PC-3 (cell line): ENCODE measurements at regions of chr12 and their contacts with region 1.

Region 1: GRCh38 chr12:93397412-93397811 is 19.7 kb downstream of the NUDT4 start:
- DNase-seq: no peak
- ATAC-seq: no peak
- H3K4me3 ChIP-seq: no peak overlapping the region
- H3K27ac ChIP-seq: no peak overlapping the region
- H3K4me1 ChIP-seq: no peaks in the 10 kb centered on the region
- H3K27me3 ChIP-seq: no peaks in the 10 kb centered on the region
- CTCF ChIP-seq: no peak

Region 2: GRCh38 chr12:92827836-92828431 is 569.5 kb before region 1 on chr12:
- CTCF ChIA-PET with region 1: no interaction called
- POLR2A ChIA-PET with region 1: no interaction called
- intact Hi-C with region 1: loop called (anchors 2 kb)
- DNase-seq: peak; percentile 72
- ATAC-seq: peak; percentile 53
- H3K4me3 ChIP-seq: no peak overlapping the region
- H3K27ac ChIP-seq: no peak overlapping the region
- H3K4me1 ChIP-seq: no peaks in the 10 kb centered on the region
- H3K27me3 ChIP-seq: no peaks in the 10 kb centered on the region
- CTCF ChIP-seq: peak; percentile 96

Region 3: GRCh38 chr12:92987362-92987761 is 410.1 kb before region 1 on chr12:
- CTCF ChIA-PET with region 1: interaction called, 8 read pairs
- POLR2A ChIA-PET with region 1: no interaction called
- intact Hi-C with region 1: loop called (anchors 2 kb)
- DNase-seq: peak; percentile 87
- ATAC-seq: peak; percentile 77
- H3K4me3 ChIP-seq: no peak overlapping the region
- H3K27ac ChIP-seq: no peak overlapping the region
- H3K4me1 ChIP-seq: peaks cover 7% of the 10 kb centered on the region
- H3K27me3 ChIP-seq: no peaks in the 10 kb centered on the region
- CTCF ChIP-seq: peak; percentile 79

Region 4: GRCh38 chr12:93025145-93025805 is 372.1 kb before region 1 on chr12:
- CTCF ChIA-PET with region 1: no interaction called
- POLR2A ChIA-PET with region 1: no interaction called
- intact Hi-C with region 1: loop called (anchors 2 kb)
- DNase-seq: peak; percentile 72
- ATAC-seq: peak; percentile 79
- H3K4me3 ChIP-seq: no peak overlapping the region
- H3K27ac ChIP-seq: no peak overlapping the region
- H3K4me1 ChIP-seq: peaks cover 7% of the 10 kb centered on the region
- H3K27me3 ChIP-seq: no peaks in the 10 kb centered on the region
- CTCF ChIP-seq: peak; percentile 84

Region 5: DNA sequence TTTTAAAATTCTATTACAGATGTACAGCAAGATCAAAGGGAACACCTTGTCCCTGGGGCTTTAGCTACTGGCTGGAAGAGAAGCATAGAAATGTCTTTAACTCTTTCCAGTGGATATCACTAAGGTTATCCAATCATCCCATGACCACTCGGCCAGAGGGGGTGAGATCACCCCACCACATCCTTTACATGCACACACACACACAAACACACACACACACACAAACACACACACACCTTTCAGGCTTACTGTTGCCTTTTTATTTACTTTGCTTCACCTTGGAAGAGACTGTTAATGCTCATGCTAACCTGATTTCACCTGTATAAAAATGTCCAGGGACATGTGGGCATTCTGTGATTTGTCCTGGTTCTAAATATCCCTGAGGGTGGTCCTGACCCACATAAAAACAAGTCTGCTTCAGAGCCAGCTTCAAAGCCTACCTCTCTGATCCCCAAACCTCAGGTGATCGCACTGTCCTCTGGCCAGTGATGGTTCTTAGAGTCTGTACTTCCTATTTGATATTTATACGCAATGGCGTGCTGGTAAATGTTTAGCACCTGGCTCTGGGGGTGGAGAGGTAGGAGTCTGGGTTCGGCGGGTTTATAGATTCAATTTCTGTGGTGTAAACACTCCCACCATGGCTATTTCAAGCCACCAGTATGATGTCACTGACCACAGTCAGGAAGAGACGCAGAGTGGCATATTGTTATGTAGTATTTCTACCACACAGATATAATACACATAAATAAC is 302.2 kb before region 1 on chr12:
- CTCF ChIA-PET with region 1: no interaction called
- POLR2A ChIA-PET with region 1: no interaction called
- intact Hi-C with region 1: loop called (anchors 5 kb)
- DNase-seq: no peak
- ATAC-seq: no peak
- H3K4me3 ChIP-seq: no peak overlapping the region
- H3K27ac ChIP-seq: no peak overlapping the region
- H3K4me1 ChIP-seq: peaks cover 28% of the 10 kb centered on the region
- H3K27me3 ChIP-seq: no peaks in the 10 kb centered on the region
- CTCF ChIP-seq: no peak